ENCODE measurements at regions of chr2 and their contacts with region 1.

Region 1: DNA sequence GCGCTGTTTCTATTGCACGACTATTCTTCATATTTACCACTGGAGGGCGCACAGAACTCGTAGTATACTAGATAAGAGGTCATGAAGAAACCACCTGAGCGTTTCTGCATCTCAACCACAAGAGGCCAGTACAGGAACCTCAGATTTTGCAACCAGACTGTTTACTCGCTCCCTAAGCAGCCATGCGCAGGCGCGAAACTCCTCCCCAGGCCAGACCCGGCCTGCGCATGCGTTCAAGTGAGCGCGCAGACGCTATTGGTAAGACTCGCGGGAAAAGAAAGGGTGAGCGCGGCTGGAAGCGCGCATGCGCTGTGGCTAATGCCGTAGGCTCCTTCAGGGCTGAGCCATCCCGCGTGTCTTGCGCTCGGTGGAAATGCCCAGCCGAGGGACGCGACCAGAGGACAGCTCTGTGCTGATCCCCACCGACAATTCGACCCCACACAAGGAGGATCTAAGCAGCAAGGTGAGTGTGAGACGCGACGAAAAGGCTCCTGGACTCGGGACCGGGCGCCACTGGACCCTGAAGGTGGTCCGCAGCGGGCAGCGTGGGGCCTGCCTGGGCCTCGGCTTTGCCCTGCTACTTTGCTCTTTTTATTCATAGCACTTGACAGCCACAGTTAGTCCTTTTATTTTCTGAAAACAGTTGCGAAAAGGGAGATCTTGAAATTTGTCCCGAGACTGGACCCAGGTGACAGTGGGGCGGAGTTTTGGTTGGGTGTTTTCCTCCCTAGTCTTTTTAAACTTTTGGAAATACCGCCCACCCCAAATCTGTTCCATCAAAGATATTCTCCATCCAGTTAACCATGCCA is at the start of gene ASNSD1:
- DNase-seq: peak; percentile 98
- H3K4me3 Mint-ChIP-seq: no peak within 1 kb of the TSS
- H3K27ac Mint-ChIP-seq: no peak within 1 kb of the TSS
- H3K4me1 Mint-ChIP-seq: peaks cover 39% of the 10 kb centered on the region
- H3K27me3 Mint-ChIP-seq: no peaks in the 10 kb centered on the region
- total RNA-seq, gene ASNSD1: 52.0 and 52.7 TPM in 2 replicates

Region 2: DNA sequence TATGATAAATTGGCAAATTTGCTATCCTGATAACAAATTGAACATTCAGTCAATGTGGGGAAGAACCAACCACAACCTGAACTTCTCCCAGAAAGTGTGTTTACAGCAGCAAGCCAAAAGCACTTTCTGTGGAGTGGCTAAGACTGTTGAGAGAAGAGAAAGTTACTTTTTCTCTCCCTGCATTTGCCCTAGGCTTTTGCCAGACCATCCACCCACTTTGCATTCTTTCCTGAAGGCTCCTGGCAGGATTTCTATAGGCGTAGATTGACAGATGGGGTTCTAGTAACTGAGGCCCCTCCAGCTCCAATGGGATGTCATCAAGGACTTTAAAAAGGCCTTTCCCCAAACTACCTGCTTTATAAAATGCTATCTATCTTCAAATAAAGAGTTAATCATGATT is 1154.5 kb before region 1 on chr2:
- intact Hi-C with region 1: no loop called
- DNase-seq: no peak
- H3K4me3 Mint-ChIP-seq: no peak overlapping the region
- H3K27ac Mint-ChIP-seq: no peak overlapping the region
- H3K4me1 Mint-ChIP-seq: no peaks in the 10 kb centered on the region
- H3K27me3 Mint-ChIP-seq: peaks cover 2% of the 10 kb centered on the region

Region 3: DNA sequence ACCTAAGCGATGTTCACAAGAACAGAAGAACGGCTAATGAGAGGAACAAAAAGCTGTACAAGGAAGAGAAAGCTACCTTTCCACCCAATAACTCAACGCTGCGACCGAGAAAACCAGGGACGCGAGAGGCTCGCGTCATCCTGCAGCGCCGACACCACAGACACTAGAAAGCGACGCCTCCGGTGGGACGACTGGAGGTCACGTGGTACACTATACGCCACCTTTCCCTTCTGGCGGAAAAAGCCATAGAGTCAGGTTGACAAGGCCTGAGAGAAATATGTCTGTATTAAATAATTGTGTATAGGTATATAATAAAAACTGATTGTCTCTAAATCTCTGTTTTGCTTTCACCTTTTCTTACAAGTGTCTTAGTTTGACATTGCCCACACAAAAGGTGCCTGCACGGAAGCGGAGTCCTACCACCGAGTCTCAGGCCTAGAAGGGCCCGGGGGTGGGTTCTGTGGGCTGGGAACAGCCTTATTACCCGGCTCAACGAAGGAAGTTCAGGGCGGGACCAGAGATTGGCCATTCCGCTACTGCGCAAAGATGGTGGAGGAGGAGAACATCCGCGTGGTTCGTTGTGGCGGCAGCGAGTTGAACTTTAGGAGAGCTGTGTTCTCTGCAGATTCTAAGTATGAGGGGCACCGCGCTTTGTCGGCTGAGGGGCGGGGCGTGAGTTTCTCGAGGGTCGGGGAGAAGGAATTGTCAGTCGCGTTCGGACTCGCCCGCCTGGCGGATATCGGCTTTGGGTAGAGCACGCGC is 220.2 kb before region 1 on chr2 and contains the start of gene WDR75:
- intact Hi-C with region 1: loop called (anchors 1 kb)
- DNase-seq: peak; percentile 87
- H3K4me3 Mint-ChIP-seq: no peak within 1 kb of the TSS
- H3K27ac Mint-ChIP-seq: peak within 1 kb of the TSS; percentile 100
- H3K4me1 Mint-ChIP-seq: peaks cover 17% of the 10 kb centered on the region
- H3K27me3 Mint-ChIP-seq: peaks cover 8% of the 10 kb centered on the region
- total RNA-seq, gene WDR75: 90.7 and 94.4 TPM in 2 replicates

Region 4: DNA sequence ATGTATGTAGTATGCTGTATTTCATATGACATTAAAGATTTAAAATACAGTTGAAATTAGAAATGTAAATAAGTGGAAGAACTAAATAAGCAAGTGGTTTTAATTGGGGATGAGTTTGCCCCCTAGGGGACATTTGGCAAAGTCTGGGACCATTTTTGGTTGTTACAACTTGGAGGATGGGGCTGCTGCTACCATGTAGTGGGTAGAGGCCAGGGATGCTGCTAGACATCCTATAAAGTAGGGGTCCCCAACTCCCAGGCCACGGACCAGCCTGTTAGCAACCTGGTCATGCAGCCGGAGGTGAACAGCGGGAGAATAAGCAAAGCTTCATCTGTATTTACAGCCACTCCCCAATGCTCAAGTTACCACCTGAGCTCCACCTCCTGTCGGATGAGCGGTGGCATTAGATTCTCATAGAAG is 27.9 kb before region 1 on chr2:
- intact Hi-C with region 1: no loop called
- DNase-seq: no peak
- H3K4me3 Mint-ChIP-seq: no peak overlapping the region
- H3K27ac Mint-ChIP-seq: no peak overlapping the region
- H3K4me1 Mint-ChIP-seq: no peaks in the 10 kb centered on the region
- H3K27me3 Mint-ChIP-seq: peaks cover 4% of the 10 kb centered on the region

Region 5: GRCh38 chr2:189674374-189675112 is 13.2 kb after region 1 on chr2 and contains the start of gene ANKAR:
- intact Hi-C with region 1: loop called (anchors 1 kb)
- DNase-seq: peak; percentile 73
- H3K4me3 Mint-ChIP-seq: peak within 1 kb of the TSS; percentile 88
- H3K27ac Mint-ChIP-seq: peak within 1 kb of the TSS; percentile 95
- H3K4me1 Mint-ChIP-seq: peaks cover 22% of the 10 kb centered on the region
- H3K27me3 Mint-ChIP-seq: no peaks in the 10 kb centered on the region
- total RNA-seq, gene ANKAR: 4.0 and 4.1 TPM in 2 replicates

Region 6: DNA sequence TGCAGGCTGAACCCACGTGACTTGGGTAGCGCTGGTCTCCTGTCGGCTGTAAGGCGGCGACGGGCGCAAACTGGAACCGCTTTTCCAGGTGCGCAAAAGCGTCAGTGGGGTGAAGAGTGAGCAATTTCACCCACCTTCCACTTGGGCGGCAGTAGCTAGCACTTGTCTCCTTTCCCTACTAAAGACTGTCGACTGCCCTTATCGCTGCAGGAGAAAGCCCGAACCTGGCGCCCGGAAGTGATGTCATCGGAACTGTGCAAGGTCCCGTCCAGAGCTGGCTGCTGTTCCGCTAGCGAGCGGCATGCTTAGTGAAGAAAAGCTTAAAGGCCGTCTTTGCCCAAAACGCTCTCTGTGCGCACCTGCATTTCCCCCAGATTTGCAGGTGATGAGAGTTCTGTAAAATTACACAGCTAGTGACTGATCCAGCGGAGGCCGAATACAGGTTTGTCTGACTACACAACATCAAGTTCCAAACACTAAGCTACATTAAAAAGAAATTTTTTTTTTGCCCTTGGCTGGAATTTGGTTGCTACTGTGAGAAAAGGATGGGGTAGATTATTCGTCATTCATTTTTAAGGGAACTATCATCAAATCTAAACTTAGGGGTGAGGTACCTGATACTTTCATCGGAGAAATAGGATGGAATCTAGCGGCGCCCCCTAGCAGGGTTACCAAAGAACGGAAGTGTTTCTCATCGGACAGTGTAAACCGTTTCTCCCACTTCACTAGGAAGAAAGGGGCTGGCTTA is 101.4 kb after region 1 on chr2 and contains the start of gene OSGEPL1:
- intact Hi-C with region 1: loop called (anchors 1 kb)
- DNase-seq: peak; percentile 90
- H3K4me3 Mint-ChIP-seq: peak within 1 kb of the TSS; percentile 92
- H3K27ac Mint-ChIP-seq: peak within 1 kb of the TSS; percentile 97
- H3K4me1 Mint-ChIP-seq: peaks cover 12% of the 10 kb centered on the region
- H3K27me3 Mint-ChIP-seq: no peaks in the 10 kb centered on the region
- total RNA-seq, gene OSGEPL1: 9.7 and 11.6 TPM in 2 replicates

Region 7: GRCh38 chr2:190069936-190070696 is 408.8 kb after region 1 on chr2:
- intact Hi-C with region 1: loop called (anchors 2 kb)
- DNase-seq: no peak
- H3K4me3 Mint-ChIP-seq: no peak overlapping the region
- H3K27ac Mint-ChIP-seq: no peak overlapping the region
- H3K4me1 Mint-ChIP-seq: peaks cover 2% of the 10 kb centered on the region
- H3K27me3 Mint-ChIP-seq: peaks cover 10% of the 10 kb centered on the region